ENCODE measurements at regions of chr16 and their contacts with region 1.

Region 1: GRCh38 chr16:88770461-88771293 is 14.3 kb downstream of the PIEZO1 start:
- DNase-seq: peak; percentile 64
- H3K4me3 ChIP-seq: no peak overlapping the region
- H3K27ac ChIP-seq: peak overlapping the region; percentile 16
- H3K4me1 ChIP-seq: peaks cover 45% of the 10 kb centered on the region
- H3K27me3 ChIP-seq: no peaks in the 10 kb centered on the region
- CTCF ChIP-seq: no peak
- POLR2A ChIP-seq: no peak

Region 2: GRCh38 chr16:88713568-88714419 is 56.9 kb before region 1 on chr16:
- CTCF ChIA-PET with region 1: no interaction called
- POLR2A ChIA-PET with region 1: no interaction called
- dilution Hi-C with region 1: no loop called
- intact Hi-C with region 1: no loop called
- DNase-seq: no peak
- H3K4me3 ChIP-seq: no peak overlapping the region
- H3K27ac ChIP-seq: no peak overlapping the region
- H3K4me1 ChIP-seq: no peaks in the 10 kb centered on the region
- H3K27me3 ChIP-seq: no peaks in the 10 kb centered on the region
- CTCF ChIP-seq: no peak
- POLR2A ChIP-seq: no peak

Region 3: DNA sequence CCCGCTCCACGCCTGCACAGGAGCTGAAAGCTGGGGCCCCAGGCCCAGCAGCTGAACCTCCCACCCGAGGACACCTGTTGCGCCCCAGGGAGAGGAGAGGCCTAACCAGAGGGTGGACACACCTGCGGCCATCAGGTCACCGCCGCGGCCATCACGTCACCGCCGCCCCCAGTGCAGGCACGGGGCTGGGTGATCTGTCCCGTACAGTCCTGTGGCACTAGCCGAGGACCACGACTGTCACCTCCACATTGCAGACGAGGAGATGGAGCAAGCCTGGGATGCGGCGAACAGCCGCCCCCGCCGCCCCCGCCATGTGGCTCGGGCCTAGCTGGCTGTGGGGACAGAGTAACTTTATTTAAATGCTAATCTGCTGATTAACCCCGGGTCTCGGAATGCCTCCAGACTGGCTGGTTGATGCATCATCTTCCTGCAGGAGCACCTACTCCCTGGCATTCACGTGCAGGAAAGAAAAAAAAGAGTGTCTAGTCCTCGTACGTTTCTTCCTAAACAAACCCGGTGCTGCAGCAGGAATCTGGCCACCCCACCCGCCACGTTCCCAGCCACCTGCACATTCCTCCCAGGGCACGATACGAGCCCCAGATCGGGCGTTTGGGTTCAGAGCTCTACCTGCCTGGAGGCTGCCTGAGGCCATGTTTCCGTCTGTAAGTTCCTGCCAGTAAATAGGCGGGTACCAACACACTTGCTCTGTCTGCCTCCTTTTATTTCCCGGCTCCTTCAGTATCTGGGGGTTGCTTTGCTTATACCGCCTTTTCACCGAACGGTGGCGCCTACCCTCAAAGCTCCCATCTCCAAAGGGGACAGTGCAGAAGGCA is 15.5 kb before region 1 on chr16:
- CTCF ChIA-PET with region 1: interaction called, 10 read pairs
- POLR2A ChIA-PET with region 1: no interaction called
- dilution Hi-C with region 1: no loop called
- intact Hi-C with region 1: no loop called
- DNase-seq: peak; percentile 20
- H3K4me3 ChIP-seq: no peak overlapping the region
- H3K27ac ChIP-seq: no peak overlapping the region
- H3K4me1 ChIP-seq: peaks cover 5% of the 10 kb centered on the region
- H3K27me3 ChIP-seq: no peaks in the 10 kb centered on the region
- CTCF ChIP-seq: peak; percentile 41 to 43
- POLR2A ChIP-seq: no peak

Region 4: GRCh38 chr16:88803264-88803987 is 32.7 kb after region 1 on chr16 and contains the start of gene CDT1:
- CTCF ChIA-PET with region 1: no interaction called
- POLR2A ChIA-PET with region 1: no interaction called
- dilution Hi-C with region 1: no loop called
- intact Hi-C with region 1: loop called (anchors 1 kb)
- DNase-seq: peak; percentile 76
- H3K4me3 ChIP-seq: peak within 1 kb of the TSS; percentile 46 to 49 (median 47)
- H3K27ac ChIP-seq: peak within 1 kb of the TSS; percentile 58
- H3K4me1 ChIP-seq: peaks cover 10% of the 10 kb centered on the region
- H3K27me3 ChIP-seq: no peaks in the 10 kb centered on the region
- CTCF ChIP-seq: no peak
- POLR2A ChIP-seq: peak; percentile 82
- total RNA-seq, gene CDT1: 26.5 and 30.6 TPM in 2 replicates